Mammary epithelial cell (primary cell): ENCODE measurements at regions of chr11 and their contacts with region 1.

Region 1: DNA sequence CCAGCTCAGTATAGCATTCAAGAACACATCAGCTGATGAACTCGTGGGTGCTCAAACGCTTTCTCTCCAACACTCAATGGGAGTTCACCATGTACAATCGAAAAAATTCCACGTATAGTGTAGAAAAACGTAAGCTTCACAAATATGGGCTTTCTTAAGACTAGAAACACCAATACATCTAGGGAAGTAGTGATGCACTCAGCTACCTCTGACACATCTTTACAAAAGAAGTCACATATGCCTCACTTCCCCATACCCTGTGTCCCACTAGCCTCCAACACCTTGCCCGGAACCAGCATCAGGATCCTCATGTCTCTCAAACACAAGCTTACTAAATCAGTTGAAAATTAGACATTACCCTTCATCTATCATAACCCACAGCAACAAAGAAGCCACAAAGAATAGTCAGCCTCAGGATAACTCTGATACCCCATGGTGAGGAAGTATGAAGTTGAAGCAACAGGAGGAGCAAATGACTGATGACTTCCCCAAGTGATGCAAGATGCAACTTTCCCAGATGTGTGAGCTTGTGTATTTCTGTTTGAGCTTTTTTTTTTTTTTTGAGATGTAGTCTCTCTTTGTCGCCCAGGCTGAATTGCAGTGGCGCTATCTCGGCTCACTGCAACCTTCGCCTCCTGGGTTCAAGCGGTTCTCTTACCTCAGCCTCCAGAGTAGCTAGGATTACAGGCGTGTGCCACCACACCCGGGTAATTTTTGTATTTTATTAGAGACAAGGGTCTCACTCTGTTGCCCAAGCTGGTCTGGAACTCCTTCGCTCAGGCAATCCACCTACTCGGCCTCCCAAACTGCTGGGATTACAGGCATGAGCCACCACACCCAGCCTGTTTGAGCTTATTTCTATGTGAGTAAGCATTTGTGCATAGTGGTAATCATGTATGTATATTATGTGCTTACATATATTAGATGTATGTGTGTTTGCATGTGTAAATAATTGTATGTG is 8.5 kb upstream of the DENND5A start:
- DNase-seq: peak; percentile 70
- H3K4me3 ChIP-seq: no peak overlapping the region
- H3K27ac ChIP-seq: no peak overlapping the region
- H3K4me1 ChIP-seq: no peaks in the 10 kb centered on the region
- H3K27me3 ChIP-seq: no peaks in the 10 kb centered on the region
- CTCF ChIP-seq: no peak

Region 2: DNA sequence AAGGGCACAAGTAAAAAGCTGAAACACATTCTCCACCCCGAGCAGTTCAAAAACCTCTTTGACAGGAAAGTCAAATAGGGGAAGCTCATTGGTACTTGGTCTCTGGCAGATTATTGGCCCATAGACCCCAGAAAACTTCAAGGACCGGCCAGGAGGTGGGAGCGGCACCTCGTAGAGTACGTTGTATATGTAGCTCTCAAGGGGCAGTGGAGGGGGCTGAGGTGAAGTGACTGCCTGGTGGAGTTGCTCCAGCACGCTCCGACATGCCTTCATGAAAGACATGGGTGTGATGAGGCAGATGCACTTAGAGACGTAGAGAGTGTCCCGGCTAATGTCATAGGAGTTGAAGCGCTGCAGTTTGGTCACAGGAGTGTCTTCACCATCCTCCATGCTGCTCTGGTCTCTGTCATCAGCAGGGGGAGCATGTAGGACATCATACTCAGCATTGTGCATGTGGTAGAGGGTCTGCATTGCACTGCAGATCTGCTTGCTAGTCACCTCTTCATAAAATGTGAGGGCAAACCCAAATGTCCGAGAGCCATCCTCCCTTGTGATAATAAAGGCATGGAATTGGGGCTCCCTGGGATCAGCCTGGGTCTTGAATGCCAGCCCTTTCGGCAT is 69.9 kb before region 1 on chr11:
- CTCF ChIA-PET with region 1: no interaction called
- dilution Hi-C with region 1: loop called (anchors 5 kb)
- in situ Hi-C with region 1: no loop called
- intact Hi-C with region 1: no loop called
- DNase-seq: no peak
- H3K4me3 ChIP-seq: no peak overlapping the region
- H3K27ac ChIP-seq: no peak overlapping the region
- H3K4me1 ChIP-seq: no peaks in the 10 kb centered on the region
- H3K27me3 ChIP-seq: no peaks in the 10 kb centered on the region
- CTCF ChIP-seq: peak in 1 of 2 donors; percentile 23

Region 3: DNA sequence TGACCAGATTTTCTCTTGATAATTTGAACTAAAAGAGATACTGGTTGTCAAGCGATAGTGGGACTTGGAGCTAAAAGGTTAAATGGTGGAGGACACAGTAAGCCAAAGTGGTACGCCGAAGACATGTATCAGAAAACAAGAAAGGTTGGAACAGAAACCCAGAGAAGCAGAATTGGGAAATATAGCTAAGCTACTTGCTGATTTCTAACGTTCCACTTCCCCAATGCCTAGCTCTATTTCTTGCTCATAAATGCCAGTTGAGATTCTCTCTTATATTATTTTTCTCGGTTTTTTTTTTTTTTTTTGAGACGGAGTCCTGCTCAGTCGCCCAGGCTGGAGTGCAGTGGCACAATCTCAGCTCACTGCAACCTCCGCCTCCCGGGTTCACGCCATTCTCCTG is 28.1 kb after region 1 on chr11:
- CTCF ChIA-PET with region 1: interaction called, 14 read pairs
- dilution Hi-C with region 1: no loop called
- in situ Hi-C with region 1: no loop called
- intact Hi-C with region 1: no loop called
- DNase-seq: no peak
- H3K4me3 ChIP-seq: no peak overlapping the region
- H3K27ac ChIP-seq: no peak overlapping the region
- H3K4me1 ChIP-seq: no peaks in the 10 kb centered on the region
- H3K27me3 ChIP-seq: no peaks in the 10 kb centered on the region
- CTCF ChIP-seq: no peak